H1 (cell line): ENCODE measurements at regions of chr14 and their contacts with region 1.

Region 1: DNA sequence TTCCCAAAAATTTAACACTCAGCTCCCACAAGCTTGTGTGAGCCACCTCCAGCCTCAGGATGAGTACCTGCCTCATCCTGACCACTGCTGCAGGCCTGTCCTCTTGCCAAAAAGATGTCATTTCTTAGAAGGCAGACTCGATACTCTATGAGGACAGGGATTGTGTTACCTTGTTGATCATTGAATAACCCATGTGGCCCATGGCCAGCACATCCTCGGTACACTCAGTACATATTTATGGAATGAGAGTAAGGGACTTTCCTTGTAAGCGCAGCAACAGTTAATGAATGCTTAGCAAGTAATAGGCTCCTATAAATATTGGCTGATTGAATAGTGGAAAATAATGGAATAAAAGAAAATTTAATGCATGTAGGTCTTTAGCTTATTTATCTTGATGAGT is 15.3 kb upstream of the DGLUCY start:
- DNase-seq: no peak
- H3K4me3 ChIP-seq: no peak overlapping the region
- H3K27ac ChIP-seq: no peak overlapping the region
- H3K4me1 ChIP-seq: no peaks in the 10 kb centered on the region
- H3K27me3 ChIP-seq: no peaks in the 10 kb centered on the region
- CTCF ChIP-seq: no peak
- EP300 ChIP-seq: no peak
- POLR2A ChIP-seq: no peak
- RAD21 ChIP-seq: no peak

Region 2: DNA sequence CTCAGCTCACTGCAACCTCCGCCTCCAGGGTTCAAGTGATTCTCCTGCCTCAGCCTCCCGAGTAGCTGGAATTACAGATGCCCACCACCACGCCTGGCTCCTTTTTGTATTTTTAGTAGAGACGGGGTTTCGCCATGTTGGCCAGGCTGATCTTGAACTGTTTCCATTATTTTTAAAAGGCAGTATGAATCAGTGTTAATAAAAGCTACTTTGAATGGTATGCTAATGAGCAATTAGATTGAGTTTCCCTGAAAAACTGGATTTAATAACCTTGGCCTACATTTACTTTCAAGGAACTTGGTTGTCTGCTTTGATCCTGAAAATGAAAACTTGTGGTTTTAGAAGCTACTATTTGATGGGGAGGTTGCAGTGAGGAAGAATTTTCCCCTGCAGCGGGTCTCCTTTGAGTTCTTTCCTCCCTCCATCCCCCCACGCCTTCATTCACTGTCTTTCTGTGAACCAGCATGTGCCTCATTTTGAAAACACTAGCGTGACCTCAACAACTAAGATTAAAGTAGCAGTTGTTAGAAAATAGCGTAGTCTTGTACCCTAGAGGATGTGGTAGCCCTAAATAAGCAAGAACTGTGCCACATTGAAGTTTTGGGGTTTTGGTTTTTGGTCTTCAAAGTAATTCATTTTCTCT is 20.4 kb before region 1 on chr14:
- CTCF ChIA-PET with region 1: interaction called, 10 read pairs
- POLR2A ChIA-PET with region 1: interaction called, 3 read pairs
- DNase-seq: no peak
- H3K4me3 ChIP-seq: no peak overlapping the region
- H3K27ac ChIP-seq: no peak overlapping the region
- H3K4me1 ChIP-seq: no peaks in the 10 kb centered on the region; a peak in 1 of 7 replicates
- H3K27me3 ChIP-seq: no peaks in the 10 kb centered on the region
- CTCF ChIP-seq: no peak
- EP300 ChIP-seq: no peak
- POLR2A ChIP-seq: no peak
- RAD21 ChIP-seq: no peak

Region 3: DNA sequence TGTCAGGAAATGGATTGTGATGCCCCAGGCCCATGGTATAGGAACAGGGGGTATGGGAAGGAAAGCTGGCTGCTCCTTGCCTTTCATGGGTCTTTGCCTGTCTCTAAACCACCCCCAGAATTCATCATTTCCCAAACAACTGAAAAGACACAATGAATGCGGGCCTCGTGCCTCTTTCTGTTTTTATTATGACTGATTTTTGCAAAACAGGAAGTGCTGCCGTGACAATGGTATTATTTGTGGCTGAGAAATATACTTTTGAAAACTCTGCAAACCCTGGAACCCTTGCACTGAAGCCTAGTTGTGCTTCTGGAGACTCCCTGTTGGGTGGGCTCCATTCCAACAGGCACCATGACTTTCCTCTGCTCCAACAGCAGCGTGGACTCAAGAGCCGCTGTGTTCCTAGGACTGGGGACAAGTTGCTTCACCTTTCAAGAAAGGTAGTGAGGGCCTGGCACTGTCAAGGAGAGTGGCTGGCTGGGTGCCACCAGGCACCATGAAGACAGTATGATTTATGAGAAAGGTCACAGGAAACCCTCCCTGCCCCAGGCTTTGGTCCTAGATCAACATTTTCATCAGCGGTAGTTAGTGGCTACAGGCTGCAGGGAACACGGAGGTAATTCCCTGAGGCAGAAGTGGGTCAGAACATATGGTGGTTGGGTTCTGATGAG is 10.5 kb after region 1 on chr14:
- CTCF ChIA-PET with region 1: interaction called, 11 read pairs
- POLR2A ChIA-PET with region 1: interaction called, 21 read pairs
- DNase-seq: no peak
- H3K4me3 ChIP-seq: no peak overlapping the region
- H3K27ac ChIP-seq: no peak overlapping the region
- H3K4me1 ChIP-seq: peaks cover 3 to 16% (median 5%) of the 10 kb centered on the region in 4 experiments; a peak in 6 of 7 replicates
- H3K27me3 ChIP-seq: no peaks in the 10 kb centered on the region
- CTCF ChIP-seq: no peak
- EP300 ChIP-seq: no peak
- POLR2A ChIP-seq: no peak
- RAD21 ChIP-seq: no peak

Region 4: GRCh38 chr14:91114079-91115065 is 15.8 kb after region 1 on chr14:
- CTCF ChIA-PET with region 1: interaction called, 3 read pairs
- POLR2A ChIA-PET with region 1: interaction called, 21 read pairs
- DNase-seq: peak; percentile 81 to 88
- H3K4me3 ChIP-seq: peak overlapping the region; percentile 20 to 55 (median 32); a peak in 7 of 8 replicates
- H3K27ac ChIP-seq: peak overlapping the region; percentile 90
- H3K4me1 ChIP-seq: peaks cover 12 to 32% (median 19%) of the 10 kb centered on the region in 4 experiments
- H3K27me3 ChIP-seq: no peaks in the 10 kb centered on the region
- CTCF ChIP-seq: no peak
- EP300 ChIP-seq: peak in 1 of 2 experiments; percentile 7; a peak in 1 of 3 replicates
- POLR2A ChIP-seq: peak; percentile 66 to 75; a peak in 2 of 3 replicates
- RAD21 ChIP-seq: no peak; a peak in 1 of 4 replicates